ENCODE measurements at regions of chr17 and their contacts with region 1.

Region 1: GRCh38 chr17:74864866-74865395 is 5.2 kb upstream of the GRIN2C start:
- DNase-seq: peak; percentile 65 to 84 (median 68)
- H3K4me3 ChIP-seq: no peak overlapping the region
- H3K4me3 Mint-ChIP-seq: no peak overlapping the region
- H3K27ac ChIP-seq: no peak overlapping the region
- H3K27ac Mint-ChIP-seq: peak overlapping the region in 4 of 7 donors; percentile 46 to 66 (median 63)
- H3K4me1 ChIP-seq: peaks cover 19 to 24% of the 10 kb centered on the region in 2 donors
- H3K4me1 Mint-ChIP-seq: peaks cover 22% of the 10 kb centered on the region
- H3K27me3 ChIP-seq: peaks cover 17 to 27% of the 10 kb centered on the region in 2 donors
- H3K27me3 Mint-ChIP-seq: peaks cover 25 to 40% (median 36%) of the 10 kb centered on the region in 3 donors
- CTCF ChIP-seq: peak; percentile 93

Region 2: GRCh38 chr17:74659898-74660297 is 205.0 kb before region 1 on chr17:
- intact Hi-C with region 1: loop called (anchors 10 kb)
- DNase-seq: peak in 1 of 3 donors; percentile 43
- H3K4me3 ChIP-seq: no peak overlapping the region
- H3K4me3 Mint-ChIP-seq: no peak overlapping the region
- H3K27ac ChIP-seq: no peak overlapping the region
- H3K27ac Mint-ChIP-seq: no peak overlapping the region
- H3K4me1 ChIP-seq: peaks cover 15 to 17% of the 10 kb centered on the region in 2 donors
- H3K4me1 Mint-ChIP-seq: peaks cover 19% of the 10 kb centered on the region
- H3K27me3 ChIP-seq: no peaks in the 10 kb centered on the region
- H3K27me3 Mint-ChIP-seq: peaks cover 0 to 2% (median 2%) of the 10 kb centered on the region in 3 donors
- CTCF ChIP-seq: no peak

Region 3: GRCh38 chr17:74748529-74749365 is 116.2 kb before region 1 on chr17 and contains the start of gene NHERF1:
- intact Hi-C with region 1: loop called (anchors 1 to 5 kb)
- DNase-seq: peak; percentile 89 to 91 (median 90)
- H3K4me3 ChIP-seq: peak within 1 kb of the TSS; percentile 91 to 98 (median 97)
- H3K4me3 Mint-ChIP-seq: peak within 1 kb of the TSS; percentile 99 to 100
- H3K27ac ChIP-seq: peak within 1 kb of the TSS; percentile 18 to 87
- H3K27ac Mint-ChIP-seq: peak within 1 kb of the TSS; percentile 80 to 94 (median 86)
- H3K4me1 ChIP-seq: peaks cover 70 to 86% of the 10 kb centered on the region in 2 donors
- H3K4me1 Mint-ChIP-seq: peaks cover 73% of the 10 kb centered on the region
- H3K27me3 ChIP-seq: no peaks in the 10 kb centered on the region
- H3K27me3 Mint-ChIP-seq: no peaks in the 10 kb centered on the region
- CTCF ChIP-seq: no peak
- polyA plus RNA-seq, gene NHERF1: 79.5 to 149 (median 131) TPM

Region 4: GRCh38 chr17:74790161-74791054 is 74.5 kb before region 1 on chr17:
- intact Hi-C with region 1: loop called (anchors 2 kb)
- DNase-seq: peak in 2 of 3 donors; percentile 54 to 77
- H3K4me3 ChIP-seq: peak overlapping the region in 1 of 3 experiments; percentile 52
- H3K4me3 Mint-ChIP-seq: peak overlapping the region; percentile 53 to 63
- H3K27ac ChIP-seq: peak overlapping the region; percentile 54 to 60
- H3K27ac Mint-ChIP-seq: peak overlapping the region; percentile 84 to 96 (median 86)
- H3K4me1 ChIP-seq: peaks cover 47 to 61% of the 10 kb centered on the region in 2 donors
- H3K4me1 Mint-ChIP-seq: peaks cover 60% of the 10 kb centered on the region
- H3K27me3 ChIP-seq: no peaks in the 10 kb centered on the region
- H3K27me3 Mint-ChIP-seq: no peaks in the 10 kb centered on the region
- CTCF ChIP-seq: no peak

Region 5: GRCh38 chr17:75131280-75132017 is 266.5 kb after region 1 on chr17 and contains the start of gene NT5C:
- intact Hi-C with region 1: no loop called
- DNase-seq: peak; percentile 43 to 56 (median 54)
- H3K4me3 ChIP-seq: peak within 1 kb of the TSS; percentile 72 to 92 (median 73)
- H3K4me3 Mint-ChIP-seq: peak within 1 kb of the TSS; percentile 84 to 88
- H3K27ac ChIP-seq: peak within 1 kb of the TSS; percentile 50 to 75
- H3K27ac Mint-ChIP-seq: peak within 1 kb of the TSS; percentile 56 to 84 (median 76)
- H3K4me1 ChIP-seq: peaks cover 17 to 25% of the 10 kb centered on the region in 2 donors
- H3K4me1 Mint-ChIP-seq: peaks cover 14% of the 10 kb centered on the region
- H3K27me3 ChIP-seq: no peaks in the 10 kb centered on the region
- H3K27me3 Mint-ChIP-seq: no peaks in the 10 kb centered on the region
- CTCF ChIP-seq: peak; percentile 53
- polyA plus RNA-seq, gene NT5C: 27.8 to 45.6 (median 36.2) TPM